AG04450 (cell line): ENCODE measurements at regions of chr1 and their contacts with region 1.

Region 1: DNA sequence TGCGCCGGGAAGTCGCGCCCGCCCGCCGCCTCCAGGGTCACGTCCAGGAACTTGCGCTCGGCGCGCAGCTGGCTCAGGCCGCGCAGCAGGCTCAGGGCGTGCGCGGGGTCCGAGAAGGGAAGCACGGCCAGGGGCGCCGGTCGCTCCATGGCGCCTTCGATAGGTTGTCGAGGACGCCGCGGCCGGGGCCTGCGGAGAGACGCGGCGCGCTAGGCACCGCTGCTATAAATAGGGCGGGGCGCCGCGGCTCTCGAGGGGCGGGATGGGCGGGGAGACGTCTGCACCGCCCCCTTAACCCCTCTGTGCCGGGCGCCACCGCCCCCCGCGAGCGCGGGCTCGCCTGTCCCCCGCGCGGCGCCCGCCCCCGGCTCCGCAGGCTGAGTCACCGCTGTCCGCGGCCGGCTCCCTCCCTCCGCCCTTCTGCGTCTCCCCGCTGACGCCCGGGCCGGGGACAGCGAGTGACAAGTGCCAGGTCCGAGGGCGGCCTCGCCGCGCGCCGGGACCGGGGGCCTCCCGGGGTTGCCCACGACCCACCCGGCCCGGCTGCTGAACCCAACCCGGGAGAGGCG is at the start of gene KLHL21:
- DNase-seq: no peak
- H3K4me3 ChIP-seq: peak within 1 kb of the TSS; percentile 98
- H3K27ac ChIP-seq: peak within 1 kb of the TSS; percentile 99
- H3K27me3 ChIP-seq: no peaks in the 10 kb centered on the region
- CTCF ChIP-seq: no peak
- polyA plus RNA-seq, gene KLHL21: 11.7 and 12.8 TPM in 2 replicates

Region 2: GRCh38 chr1:6612641-6613360 is 10.0 kb after region 1 on chr1:
- CTCF ChIA-PET with region 1: interaction called, 6 read pairs
- POLR2A ChIA-PET with region 1: interaction called, 10 read pairs
- DNase-seq: no peak
- H3K4me3 ChIP-seq: peak overlapping the region; percentile 86
- H3K27ac ChIP-seq: peak overlapping the region; percentile 77
- H3K27me3 ChIP-seq: no peaks in the 10 kb centered on the region
- CTCF ChIP-seq: no peak

Region 3: DNA sequence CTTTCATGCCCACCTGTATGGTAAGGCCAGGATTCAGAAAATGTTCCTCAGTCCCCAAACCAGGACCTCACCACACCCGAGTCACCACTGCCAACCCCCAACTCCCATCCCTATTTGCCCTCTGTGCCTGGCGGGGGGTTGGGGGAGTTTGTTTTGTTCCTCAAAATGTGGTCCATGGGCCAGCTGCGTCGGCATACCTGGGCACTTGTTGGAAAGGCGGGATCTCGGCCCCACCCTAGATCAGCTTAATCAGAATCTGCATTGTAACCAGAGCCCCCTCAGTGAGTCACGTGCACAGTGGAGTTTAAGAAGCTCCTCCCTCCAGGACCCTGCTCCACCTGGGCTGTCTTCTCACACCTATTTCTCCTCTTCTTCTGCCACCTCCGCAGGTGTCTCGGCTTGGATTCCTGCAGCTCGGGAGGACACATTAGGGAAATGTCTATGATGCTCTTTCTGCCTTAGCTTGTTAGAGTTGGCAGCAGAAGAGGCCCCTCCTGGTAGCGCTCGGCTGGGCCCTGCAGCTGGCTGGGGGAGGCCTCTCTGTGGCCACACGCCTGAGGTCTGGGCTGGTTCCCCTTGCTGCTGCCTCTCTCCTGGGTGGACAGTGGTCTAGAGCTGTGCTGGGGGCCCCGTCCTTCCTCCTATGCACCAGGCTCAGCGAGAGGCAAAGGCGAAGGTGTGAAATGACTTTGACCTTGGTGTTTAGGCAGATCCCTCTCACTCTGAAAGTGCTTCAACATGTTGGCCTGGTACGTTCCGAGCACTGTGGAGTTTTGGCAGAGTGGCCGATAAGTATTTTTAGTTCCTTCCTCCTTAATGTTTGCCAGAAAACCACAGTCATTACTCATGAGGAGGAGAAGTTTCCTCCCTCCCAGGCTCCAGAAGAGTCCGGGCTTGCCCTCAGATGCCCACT is 140.7 kb after region 1 on chr1:
- CTCF ChIA-PET with region 1: no interaction called
- POLR2A ChIA-PET with region 1: no interaction called
- DNase-seq: peak; percentile 36
- H3K4me3 ChIP-seq: 0 out of 2 replicates have a peak overlapping the region, but pooled peaks have one; percentile 13
- H3K27ac ChIP-seq: peak overlapping the region; percentile 73
- H3K27me3 ChIP-seq: peaks cover 5% of the 10 kb centered on the region
- CTCF ChIP-seq: no peak